Psoas muscle (tissue), 8 donors: ENCODE measurements at regions of chr3 and their contacts with region 1.

Region 1: GRCh38 chr3:24485511-24485910 is 9.1 kb downstream of the THRB start:
- DNase-seq: no peak
- ATAC-seq: peak in 2 of 4 donors; percentile 35 to 40
- H3K4me3 ChIP-seq: no peak overlapping the region
- H3K27ac ChIP-seq: no peak overlapping the region
- H3K4me1 ChIP-seq: peaks cover 88% of the 10 kb centered on the region
- H3K27me3 ChIP-seq: no peaks in the 10 kb centered on the region
- CTCF ChIP-seq: no peak

Region 2: GRCh38 chr3:24446032-24446431 is 39.5 kb before region 1 on chr3:
- intact Hi-C with region 1: loop called (anchors 5 kb)
- DNase-seq: no peak
- ATAC-seq: peak; percentile 76 to 87 (median 84)
- H3K4me3 ChIP-seq: no peak overlapping the region
- H3K27ac ChIP-seq: peak overlapping the region; percentile 74
- H3K4me1 ChIP-seq: peaks cover 58% of the 10 kb centered on the region
- H3K27me3 ChIP-seq: no peaks in the 10 kb centered on the region
- CTCF ChIP-seq: no peak

Region 3: DNA sequence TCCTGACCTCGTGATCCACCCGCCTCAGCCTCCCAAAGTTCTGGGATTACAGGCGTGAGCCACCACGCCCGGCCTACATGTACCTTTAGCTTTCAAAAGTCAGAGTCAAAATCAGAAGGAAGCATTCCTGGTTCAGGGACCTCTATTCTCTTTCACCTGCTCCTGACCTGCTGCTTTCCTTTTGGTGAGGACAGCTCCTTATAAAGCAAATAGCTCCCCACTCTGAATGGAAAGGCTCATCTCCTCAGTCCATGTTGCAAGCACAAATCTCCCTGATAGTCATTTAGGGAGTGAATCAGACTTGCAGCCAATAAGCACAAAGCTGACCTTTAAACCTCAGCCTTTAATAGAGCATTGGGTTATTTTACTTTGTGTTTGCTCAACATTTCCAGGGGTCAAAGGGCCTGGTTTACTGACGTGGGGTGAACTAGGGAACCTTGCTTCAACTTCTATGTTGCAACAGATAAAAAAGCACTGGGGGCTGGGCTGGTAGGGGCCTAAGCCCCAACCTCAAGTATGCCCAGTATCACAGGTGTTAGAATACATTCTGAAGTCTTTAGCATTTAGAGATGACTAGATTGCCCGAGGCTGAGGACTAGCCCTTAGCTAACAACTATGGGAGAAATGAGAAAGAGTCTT is 33.9 kb before region 1 on chr3:
- intact Hi-C with region 1: loop called (anchors 5 kb)
- DNase-seq: no peak
- ATAC-seq: peak in 2 of 4 donors; percentile 53 to 61
- H3K4me3 ChIP-seq: no peak overlapping the region
- H3K27ac ChIP-seq: peak overlapping the region; percentile 72
- H3K4me1 ChIP-seq: peaks cover 32% of the 10 kb centered on the region
- H3K27me3 ChIP-seq: no peaks in the 10 kb centered on the region
- CTCF ChIP-seq: no peak

Region 4: DNA sequence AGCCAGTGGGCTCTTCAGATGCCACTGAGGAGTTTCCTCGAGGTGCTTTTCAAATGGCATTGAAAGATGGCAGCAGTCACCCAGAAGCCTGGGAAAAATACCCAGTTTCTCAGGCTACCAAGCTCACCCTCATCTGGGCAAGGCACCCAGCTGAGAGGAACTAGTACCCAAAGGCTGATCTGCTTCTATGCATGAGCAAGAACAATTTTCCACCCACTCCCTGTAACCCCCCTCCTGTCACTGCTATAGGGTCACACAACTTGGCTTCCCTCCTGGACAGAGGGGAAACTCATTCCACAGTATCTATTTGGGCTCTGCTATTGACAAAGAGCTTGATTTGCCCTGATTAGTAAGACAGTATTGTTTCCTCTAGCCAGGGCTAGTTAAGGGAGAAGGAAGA is 22.8 kb before region 1 on chr3:
- intact Hi-C with region 1: no loop called
- DNase-seq: no peak
- ATAC-seq: peak in 3 of 4 donors; percentile 17 to 42 (median 26)
- H3K4me3 ChIP-seq: no peak overlapping the region
- H3K27ac ChIP-seq: no peak overlapping the region
- H3K4me1 ChIP-seq: peaks cover 14% of the 10 kb centered on the region
- H3K27me3 ChIP-seq: no peaks in the 10 kb centered on the region
- CTCF ChIP-seq: no peak